Dorsolateral prefrontal cortex (tissue), 120 donors: ENCODE measurements at regions of chr11 and their contacts with region 1.

Region 1: DNA sequence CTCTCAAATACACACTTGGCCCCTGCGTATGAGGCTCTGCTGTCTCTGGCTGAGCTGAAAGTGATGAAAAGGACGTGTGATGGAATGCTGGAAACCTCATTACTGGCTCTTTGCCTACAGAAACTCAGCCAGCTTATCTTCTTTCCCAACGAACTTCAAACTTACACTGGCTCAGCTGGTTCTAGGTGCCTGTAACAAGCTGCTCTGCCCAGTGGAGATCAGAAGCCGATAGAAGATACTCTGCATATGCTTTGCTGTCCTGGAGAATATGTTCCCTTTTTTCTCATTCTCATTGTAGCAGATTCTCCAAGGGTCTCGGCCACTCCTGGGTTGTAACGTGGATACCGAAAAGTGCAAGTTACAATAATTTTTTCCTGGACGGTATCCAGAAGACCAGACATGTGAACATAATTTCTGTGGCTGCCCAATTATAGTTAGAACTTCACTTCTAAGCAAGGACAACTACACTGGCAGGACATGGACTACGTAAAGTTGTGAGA is 405.3 kb upstream of the CCDC90B start:
- DNase-seq: no peak
- H3K4me3 ChIP-seq: no peak overlapping the region
- H3K27ac ChIP-seq: peak overlapping the region in 18 of 59 donors; percentile 13 to 57 (median 30)
- H3K27me3 ChIP-seq: no peaks in the 10 kb centered on the region
- CTCF ChIP-seq: no peak

Region 2: GRCh38 chr11:83724008-83724461 is 32.5 kb after region 1 on chr11:
- intact Hi-C with region 1: loop called in 1 of 2 experiments (anchors 5 kb)
- DNase-seq: no peak
- H3K4me3 ChIP-seq: peak overlapping the region in 32 of 59 donors; percentile 4 to 51 (median 32)
- H3K27ac ChIP-seq: peak overlapping the region in 45 of 59 donors; percentile 7 to 79 (median 60)
- H3K27me3 ChIP-seq: no peaks in the 10 kb centered on the region
- CTCF ChIP-seq: peak in 33 of 56 donors; percentile 10 to 60 (median 32)